ENCODE measurements at regions of chr4 and their contacts with region 1.

Region 1: GRCh38 chr4:114399105-114399504 is 199.5 kb upstream of the UGT8 start:
- ATAC-seq: peak in 2 of 8 experiments; percentile 24 to 31
- H3K4me3 ChIP-seq: no peak overlapping the region
- H3K27ac ChIP-seq: no peak overlapping the region
- H3K4me1 ChIP-seq: no peaks in the 10 kb centered on the region

Region 2: DNA sequence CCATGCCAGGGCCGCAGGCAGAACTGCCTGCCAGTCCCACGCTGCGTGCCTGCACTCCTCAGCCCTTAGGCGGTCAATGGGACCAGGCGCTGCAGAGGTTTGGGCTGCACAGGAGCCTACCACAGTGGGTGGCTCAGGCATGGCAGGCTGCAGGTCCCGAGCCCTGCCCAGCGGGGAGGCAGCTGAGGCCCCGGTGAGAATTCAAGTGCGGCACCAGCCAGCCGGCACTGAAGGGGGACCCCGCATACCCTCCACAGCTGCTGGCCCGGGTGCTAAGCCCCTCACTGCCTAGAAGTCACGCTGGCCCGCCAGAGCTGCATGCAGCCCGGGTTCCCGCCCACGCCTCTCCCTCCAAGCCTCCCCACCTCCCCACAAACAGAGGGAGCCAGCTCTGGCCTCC is 103.0 kb before region 1 on chr4:
- in situ Hi-C with region 1: no loop called
- ATAC-seq: no peak
- H3K4me3 ChIP-seq: no peak overlapping the region
- H3K27ac ChIP-seq: no peak overlapping the region
- H3K4me1 ChIP-seq: no peaks in the 10 kb centered on the region

Region 3: GRCh38 chr4:114694770-114695169 is 295.7 kb after region 1 on chr4:
- in situ Hi-C with region 1: loop called in 4 of 9 experiments (anchors 10 to 25 kb)
- ATAC-seq: no peak
- H3K4me3 ChIP-seq: no peak overlapping the region
- H3K27ac ChIP-seq: no peak overlapping the region
- H3K4me1 ChIP-seq: peaks cover 0 to 2% of the 10 kb centered on the region in 2 donors